Aorta (tissue), 5 donors: ENCODE measurements at regions of chr11 and their contacts with region 1.

Region 1: DNA sequence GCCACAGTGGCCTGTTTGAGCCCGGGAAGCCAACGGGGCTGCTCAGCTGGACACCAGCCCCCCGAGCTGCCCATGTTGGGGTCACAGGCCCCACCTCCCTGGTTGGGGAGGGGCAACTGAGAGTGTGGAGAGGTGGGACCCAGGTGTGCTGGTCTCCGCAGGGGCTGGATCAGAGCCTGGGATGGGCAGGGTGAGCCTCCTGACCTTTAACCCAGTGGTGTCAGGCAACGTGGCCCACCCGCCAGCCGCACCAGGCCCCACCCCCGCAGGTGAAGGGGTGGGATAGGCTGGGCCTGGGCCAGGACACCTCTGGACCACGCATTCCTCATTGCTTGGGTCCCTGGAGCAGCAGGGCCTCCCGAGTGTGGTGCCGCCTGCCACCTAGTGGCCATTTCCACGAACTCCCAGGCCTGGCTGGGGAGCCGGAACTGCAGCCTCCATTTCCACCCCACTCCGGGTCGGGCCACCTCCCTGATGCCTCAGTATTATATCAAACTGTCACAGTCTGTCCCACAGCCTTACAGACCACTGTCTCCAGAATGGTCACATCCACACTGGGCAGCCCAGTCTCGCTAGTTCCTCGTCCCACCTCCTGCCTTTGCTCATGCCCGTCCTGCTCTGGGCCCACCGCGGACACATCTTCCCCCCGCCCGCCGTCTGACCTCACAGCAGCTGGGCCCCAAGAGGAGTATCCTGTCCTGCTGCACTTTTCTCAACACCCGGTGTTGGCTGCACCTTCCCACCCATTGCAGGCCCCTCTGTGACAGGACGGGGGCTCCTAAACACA is 13.3 kb upstream of the PPP6R3 start:
- DNase-seq: peak; percentile 87 to 91
- ATAC-seq: peak; percentile 88
- H3K4me3 ChIP-seq: no peak overlapping the region
- H3K27ac ChIP-seq: no peak overlapping the region
- H3K4me1 ChIP-seq: no peaks in the 10 kb centered on the region
- H3K27me3 ChIP-seq: no peaks in the 10 kb centered on the region

Region 2: DNA sequence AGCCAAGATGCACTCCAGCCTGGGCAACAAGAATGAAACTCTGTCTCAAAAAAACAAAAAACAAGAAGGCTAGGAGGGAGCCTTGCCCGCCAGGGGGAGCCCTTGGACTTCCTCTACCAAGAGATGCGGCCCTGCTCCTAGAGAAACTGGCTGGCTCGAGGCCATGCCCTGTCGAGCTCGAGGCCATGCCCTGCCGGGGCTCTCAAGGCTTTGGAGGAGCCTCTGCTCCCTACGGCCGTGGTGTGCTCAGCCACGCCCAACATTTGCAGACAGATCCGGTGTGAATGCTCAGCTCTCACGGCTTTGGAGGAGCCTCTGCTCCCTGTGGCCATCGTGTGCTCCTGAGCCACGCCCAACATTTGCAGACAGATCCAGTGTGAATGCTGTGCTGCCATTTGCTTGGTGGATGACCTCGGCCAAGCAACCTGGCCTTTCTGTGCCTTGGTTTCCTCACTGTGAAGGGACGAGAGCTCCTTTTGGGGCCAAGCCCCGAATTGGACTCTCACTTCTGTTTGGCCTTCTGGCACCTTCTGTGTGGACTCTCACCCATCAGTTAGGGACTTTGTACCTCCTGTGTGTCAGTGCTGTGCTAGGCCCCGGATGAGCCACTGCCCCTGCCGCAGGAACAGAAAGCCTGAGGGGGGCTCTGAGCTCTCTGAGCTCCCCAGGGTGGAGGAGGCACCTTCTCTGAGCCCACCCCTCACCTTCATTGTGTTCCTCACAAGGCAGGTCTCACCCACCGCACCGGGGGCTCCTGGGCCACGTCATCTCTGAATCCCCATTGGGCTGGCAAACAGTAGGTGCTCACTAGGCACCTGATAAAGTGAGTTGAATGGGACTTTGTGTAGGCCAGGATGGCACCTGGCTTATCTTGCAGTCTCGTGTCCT is 189.5 kb before region 1 on chr11:
- intact Hi-C with region 1: loop called (anchors 2 kb)
- DNase-seq: peak; percentile 98 to 99
- ATAC-seq: peak; percentile 89
- H3K4me3 ChIP-seq: no peak overlapping the region
- H3K27ac ChIP-seq: no peak overlapping the region
- H3K4me1 ChIP-seq: no peaks in the 10 kb centered on the region
- H3K27me3 ChIP-seq: no peaks in the 10 kb centered on the region

Region 3: DNA sequence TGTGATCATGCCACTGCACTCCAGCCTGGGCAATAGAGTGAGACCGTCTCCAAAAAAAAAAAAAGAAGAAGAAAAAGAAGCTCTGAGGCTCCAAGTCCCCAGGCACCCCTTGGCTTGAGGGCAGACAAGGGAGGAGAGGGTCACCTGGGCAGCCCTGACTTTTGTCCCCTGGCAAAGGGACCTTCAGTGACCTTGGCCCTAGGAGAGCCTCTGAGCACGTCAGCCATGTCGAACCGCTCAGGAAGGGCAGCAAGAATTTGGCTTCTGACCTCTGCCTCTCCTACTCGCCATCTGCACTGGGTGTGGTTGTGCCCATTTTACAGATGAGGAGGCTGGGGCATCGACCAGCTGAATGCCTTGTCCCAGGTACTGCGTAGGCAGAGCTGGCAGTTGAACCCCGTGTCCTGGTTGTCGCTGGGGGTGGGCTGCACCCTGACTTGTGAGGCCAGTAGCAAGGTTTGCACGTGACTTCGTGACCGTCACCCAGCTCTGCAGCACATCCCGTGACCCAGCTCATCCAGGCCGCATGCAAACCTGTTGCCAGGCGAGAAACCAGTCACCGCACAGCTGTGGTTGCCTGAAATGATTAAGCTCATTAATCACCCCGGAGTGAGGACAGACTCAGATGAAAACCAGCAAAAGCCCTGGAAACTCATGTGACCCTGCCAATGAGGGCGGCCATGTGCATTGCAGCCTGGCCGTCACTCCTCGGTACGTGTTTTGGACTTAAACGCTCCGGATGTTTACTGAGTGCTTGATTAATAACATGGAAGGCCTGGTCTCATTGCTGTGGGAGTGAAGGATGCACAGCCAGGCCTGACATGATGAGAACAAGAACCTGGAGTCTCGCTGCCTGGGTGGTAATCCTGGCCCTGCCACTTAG is 34.4 kb before region 1 on chr11:
- intact Hi-C with region 1: no loop called
- DNase-seq: no peak
- ATAC-seq: no peak
- H3K4me3 ChIP-seq: no peak overlapping the region
- H3K27ac ChIP-seq: no peak overlapping the region
- H3K4me1 ChIP-seq: no peaks in the 10 kb centered on the region
- H3K27me3 ChIP-seq: no peaks in the 10 kb centered on the region